CD8-positive, alpha-beta T cell (primary cell): ENCODE measurements at regions of chr12 and their contacts with region 1.

Region 1: GRCh38 chr12:85468356-85469157 is 188.5 kb downstream of the ALX1 start:
- DNase-seq: peak in 2 of 9 experiments; percentile 11 to 32
- ATAC-seq: peak; percentile 59
- H3K4me3 ChIP-seq: peak overlapping the region in 1 of 2 experiments; percentile 29
- H3K4me3 Mint-ChIP-seq: peak overlapping the region; percentile 81
- H3K27ac ChIP-seq: no peak overlapping the region
- H3K27ac Mint-ChIP-seq: no peak overlapping the region
- H3K4me1 ChIP-seq: no peaks in the 10 kb centered on the region
- H3K4me1 Mint-ChIP-seq: peaks cover 12% of the 10 kb centered on the region
- H3K27me3 ChIP-seq: no peaks in the 10 kb centered on the region
- H3K27me3 Mint-ChIP-seq: no peaks in the 10 kb centered on the region
- CTCF ChIP-seq: peak; percentile 24

Region 2: DNA sequence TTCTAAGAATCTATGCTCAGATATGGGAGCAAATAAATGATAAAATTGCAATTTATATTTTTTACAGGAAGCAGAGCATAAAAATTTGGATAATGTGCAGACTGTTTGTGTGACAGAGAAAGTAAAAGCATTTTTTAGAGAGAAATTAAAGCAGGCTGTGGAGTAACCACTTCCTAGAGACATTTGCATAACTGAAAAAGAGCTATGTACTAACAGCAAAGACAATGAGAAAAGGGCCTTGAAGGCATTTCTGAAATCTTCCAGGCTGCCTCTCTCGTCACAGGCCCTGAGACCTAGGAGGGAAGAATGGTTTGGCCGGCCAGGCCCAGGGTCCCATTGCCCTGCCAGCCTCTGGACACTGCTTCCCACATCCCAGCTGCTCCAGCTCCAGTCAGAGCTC is 58.6 kb after region 1 on chr12:
- CTCF ChIA-PET with region 1: no interaction called
- POLR2A ChIA-PET with region 1: no interaction called
- intact Hi-C with region 1: no loop called
- DNase-seq: no peak
- ATAC-seq: no peak
- H3K4me3 ChIP-seq: no peak overlapping the region
- H3K4me3 Mint-ChIP-seq: no peak overlapping the region
- H3K27ac ChIP-seq: no peak overlapping the region
- H3K27ac Mint-ChIP-seq: no peak overlapping the region
- H3K4me1 ChIP-seq: no peaks in the 10 kb centered on the region
- H3K4me1 Mint-ChIP-seq: no peaks in the 10 kb centered on the region
- H3K27me3 ChIP-seq: no peaks in the 10 kb centered on the region
- H3K27me3 Mint-ChIP-seq: no peaks in the 10 kb centered on the region
- CTCF ChIP-seq: no peak

Region 3: GRCh38 chr12:85872497-85873091 is 404.0 kb after region 1 on chr12:
- CTCF ChIA-PET with region 1: interaction called, 3 read pairs
- POLR2A ChIA-PET with region 1: no interaction called
- intact Hi-C with region 1: loop called (anchors 2 to 5 kb)
- DNase-seq: peak in 2 of 9 experiments; percentile 5 to 33
- ATAC-seq: no peak
- H3K4me3 ChIP-seq: no peak overlapping the region
- H3K4me3 Mint-ChIP-seq: no peak overlapping the region
- H3K27ac ChIP-seq: no peak overlapping the region
- H3K27ac Mint-ChIP-seq: no peak overlapping the region
- H3K4me1 ChIP-seq: no peaks in the 10 kb centered on the region
- H3K4me1 Mint-ChIP-seq: no peaks in the 10 kb centered on the region
- H3K27me3 ChIP-seq: no peaks in the 10 kb centered on the region
- H3K27me3 Mint-ChIP-seq: no peaks in the 10 kb centered on the region
- CTCF ChIP-seq: peak; percentile 66

Region 4: DNA sequence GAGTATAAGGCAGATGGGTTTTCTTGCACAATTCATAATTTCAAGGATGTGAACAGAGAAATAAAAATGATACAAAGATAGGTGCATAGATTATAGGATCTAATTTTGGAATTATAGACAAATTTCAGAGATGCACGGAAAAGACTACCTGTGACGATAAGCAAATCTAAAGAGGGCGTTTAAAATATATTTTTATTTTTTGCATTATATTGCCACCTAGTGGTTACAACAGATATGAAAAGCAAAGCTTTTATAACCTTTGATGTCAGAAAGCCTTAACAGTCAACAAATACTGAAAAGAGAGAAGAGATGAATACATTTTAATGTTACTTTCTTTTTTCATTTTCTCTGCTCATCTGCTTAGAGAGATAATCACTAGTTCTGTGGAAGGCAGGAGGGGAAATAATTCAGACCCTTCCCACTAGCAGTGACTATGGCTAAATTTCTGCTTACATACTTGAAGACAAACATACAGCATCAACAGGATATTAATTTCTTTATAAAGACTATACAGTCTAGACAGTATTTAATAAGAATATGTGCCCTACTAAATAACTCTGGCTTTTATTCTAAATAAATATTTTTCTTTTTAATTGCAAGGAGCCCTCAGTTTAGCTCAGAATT is 451.9 kb after region 1 on chr12:
- CTCF ChIA-PET with region 1: no interaction called
- POLR2A ChIA-PET with region 1: no interaction called
- intact Hi-C with region 1: loop called in 1 of 2 experiments (anchors 2 kb)
- DNase-seq: peak in 1 of 9 experiments; percentile 9
- ATAC-seq: no peak
- H3K4me3 ChIP-seq: no peak overlapping the region
- H3K4me3 Mint-ChIP-seq: no peak overlapping the region
- H3K27ac ChIP-seq: no peak overlapping the region
- H3K27ac Mint-ChIP-seq: no peak overlapping the region
- H3K4me1 ChIP-seq: no peaks in the 10 kb centered on the region
- H3K4me1 Mint-ChIP-seq: no peaks in the 10 kb centered on the region
- H3K27me3 ChIP-seq: no peaks in the 10 kb centered on the region
- H3K27me3 Mint-ChIP-seq: no peaks in the 10 kb centered on the region
- CTCF ChIP-seq: peak; percentile 64